Activated B cell treated with CpG ODN at 0.5 μM for 24 hours (primary cell): ENCODE measurements at regions of chr17 and their contacts with region 1.

Region 1: GRCh38 chr17:7296189-7296902 is 1.9 kb upstream of the YBX2 start:
- DNase-seq: peak; percentile 75
- ATAC-seq: peak; percentile 49
- H3K4me3 Mint-ChIP-seq: peak overlapping the region; percentile 32
- H3K27ac Mint-ChIP-seq: no peak overlapping the region
- H3K4me1 Mint-ChIP-seq: peaks cover 24% of the 10 kb centered on the region
- H3K27me3 Mint-ChIP-seq: peaks cover 18% of the 10 kb centered on the region
- CTCF ChIP-seq: peak; percentile 29

Region 2: DNA sequence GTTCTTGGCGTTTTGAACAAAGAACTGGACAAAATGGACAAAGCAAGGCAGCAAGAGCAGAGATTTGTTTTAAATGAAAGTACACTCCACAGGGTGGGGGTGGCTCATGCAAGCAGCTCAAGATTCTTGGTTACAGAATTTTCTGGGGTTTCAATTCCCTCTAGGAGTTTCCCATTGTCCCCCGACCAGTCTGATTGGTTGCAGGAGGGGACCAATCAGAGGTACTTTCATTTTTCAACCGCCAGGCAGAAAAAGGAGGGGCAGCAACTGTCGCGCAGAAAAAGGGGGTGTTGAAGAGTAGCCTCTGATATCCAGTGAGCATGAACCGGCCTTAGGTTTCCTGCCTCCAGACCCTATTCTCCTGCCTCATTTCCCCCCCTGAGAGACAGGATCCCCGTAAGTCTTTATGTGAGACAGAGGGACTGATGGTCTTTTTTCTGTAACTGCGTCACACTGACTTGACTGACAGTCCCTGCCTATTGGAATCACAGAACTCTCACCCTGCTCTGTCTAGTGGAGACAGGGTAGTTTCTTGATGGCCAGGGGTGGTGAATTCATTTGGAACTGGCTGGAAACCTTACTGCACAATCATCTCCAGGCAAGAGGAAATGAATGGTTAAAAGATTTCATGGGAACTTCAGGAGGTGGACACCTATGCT is 359.8 kb before region 1 on chr17:
- CTCF ChIA-PET with region 1: no interaction called
- POLR2A ChIA-PET with region 1: no interaction called
- intact Hi-C with region 1: no loop called
- DNase-seq: no peak
- ATAC-seq: peak; percentile 91
- H3K4me3 Mint-ChIP-seq: peak overlapping the region; percentile 77
- H3K27ac Mint-ChIP-seq: peak overlapping the region; percentile 76
- H3K4me1 Mint-ChIP-seq: peaks cover 9% of the 10 kb centered on the region
- H3K27me3 Mint-ChIP-seq: no peaks in the 10 kb centered on the region
- CTCF ChIP-seq: no peak

Region 3: GRCh38 chr17:7214300-7215135 is 81.8 kb before region 1 on chr17:
- CTCF ChIA-PET with region 1: interaction called, 24 read pairs
- POLR2A ChIA-PET with region 1: no interaction called
- intact Hi-C with region 1: loop called (anchors 1 kb)
- DNase-seq: peak; percentile 98
- ATAC-seq: peak; percentile 86
- H3K4me3 Mint-ChIP-seq: peak overlapping the region; percentile 88
- H3K27ac Mint-ChIP-seq: peak overlapping the region; percentile 94
- H3K4me1 Mint-ChIP-seq: peaks cover 53% of the 10 kb centered on the region
- H3K27me3 Mint-ChIP-seq: no peaks in the 10 kb centered on the region
- CTCF ChIP-seq: no peak

Region 4: DNA sequence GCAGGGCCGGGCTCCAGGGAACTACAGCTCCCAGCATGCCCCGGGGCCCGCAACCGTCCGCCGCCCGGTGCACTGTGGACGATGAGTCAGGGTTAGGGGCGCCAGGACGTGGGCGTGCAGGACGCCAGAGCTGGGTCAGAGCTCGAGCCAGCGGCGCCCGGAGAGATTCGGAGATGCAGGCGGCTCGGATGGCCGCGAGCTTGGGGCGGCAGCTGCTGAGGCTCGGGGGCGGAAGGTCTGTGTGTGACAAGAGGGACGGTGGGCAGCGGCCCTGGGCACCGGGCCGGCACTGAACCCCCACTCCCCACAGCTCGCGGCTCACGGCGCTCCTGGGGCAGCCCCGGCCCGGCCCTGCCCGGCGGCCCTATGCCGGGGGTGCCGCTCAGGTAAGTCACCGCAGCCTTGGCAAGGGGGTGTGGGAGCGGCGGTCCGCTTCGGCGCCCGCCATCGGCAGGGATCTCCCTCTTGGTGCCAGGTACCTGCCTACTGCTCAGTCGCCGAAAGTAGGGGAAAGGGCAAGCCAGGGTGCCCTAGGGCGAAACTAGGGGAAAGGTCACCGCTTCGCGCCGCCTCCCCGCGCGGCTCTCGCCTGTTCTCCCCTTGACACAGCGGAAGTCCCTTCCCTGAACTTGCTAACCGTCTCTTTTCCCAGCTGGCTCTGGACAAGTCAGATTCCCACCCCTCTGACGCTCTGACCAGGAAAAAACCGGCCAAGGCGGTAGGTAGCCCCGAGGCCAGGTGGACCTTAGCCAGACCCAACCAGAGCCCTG is 76.3 kb before region 1 on chr17 and contains the starts of genes ACADVL and DLG4:
- CTCF ChIA-PET with region 1: interaction called, 24 read pairs
- POLR2A ChIA-PET with region 1: interaction called, 10 read pairs
- intact Hi-C with region 1: loop called (anchors 1 kb)
- DNase-seq: peak; percentile 75
- ATAC-seq: peak; percentile 75
- H3K4me3 Mint-ChIP-seq: peak within 1 kb of the TSS; percentile 96
- H3K27ac Mint-ChIP-seq: peak within 1 kb of the TSS; percentile 91
- H3K4me1 Mint-ChIP-seq: peaks cover 53% of the 10 kb centered on the region
- H3K27me3 Mint-ChIP-seq: no peaks in the 10 kb centered on the region
- CTCF ChIP-seq: no peak
- total RNA-seq, gene ACADVL: 438 and 469 TPM in 2 replicates
- total RNA-seq, gene DLG4: 3.9 and 5.0 TPM in 2 replicates

Region 5: DNA sequence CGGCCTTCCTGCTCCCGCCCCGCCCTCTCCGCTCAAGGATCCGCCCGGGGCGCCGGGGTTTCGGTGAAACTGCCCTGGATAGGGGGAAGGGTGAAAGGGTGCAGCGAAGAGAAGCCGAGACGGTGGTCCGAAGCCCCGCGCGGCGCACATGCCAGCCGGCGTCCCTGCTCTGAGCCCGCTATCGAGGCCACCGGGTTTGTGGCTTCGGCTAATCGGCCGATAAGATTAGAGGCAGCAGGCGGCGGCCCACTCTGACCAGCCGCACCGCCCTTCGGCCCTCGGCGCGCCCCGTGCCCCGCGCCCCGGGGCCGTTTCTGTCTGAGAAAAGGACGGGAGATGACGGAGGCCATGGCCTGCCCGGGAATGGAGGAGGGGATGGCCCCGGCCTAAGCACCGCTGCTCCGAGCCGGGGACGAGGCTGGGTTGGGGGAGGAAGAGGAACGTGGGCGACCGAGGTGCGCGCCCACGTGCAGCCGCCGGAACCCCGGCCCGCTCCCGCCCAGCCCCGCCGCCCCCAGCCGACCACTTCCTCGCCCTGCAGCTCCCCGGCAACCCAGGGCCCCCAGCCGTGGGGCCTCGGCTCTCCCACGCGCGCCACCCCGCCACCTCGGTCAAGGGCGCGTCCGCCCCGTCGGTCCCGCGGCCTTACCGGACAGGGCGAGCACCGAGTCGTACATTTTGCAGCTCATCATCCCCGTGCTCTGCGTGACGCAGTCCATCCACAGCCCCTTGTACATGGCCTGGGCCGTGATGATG is 35.0 kb before region 1 on chr17:
- CTCF ChIA-PET with region 1: interaction called, 3 read pairs
- POLR2A ChIA-PET with region 1: interaction called, 3 read pairs
- intact Hi-C with region 1: loop called (anchors 5 kb)
- DNase-seq: peak; percentile 40
- ATAC-seq: peak; percentile 64
- H3K4me3 Mint-ChIP-seq: peak overlapping the region; percentile 77
- H3K27ac Mint-ChIP-seq: peak overlapping the region; percentile 76
- H3K4me1 Mint-ChIP-seq: peaks cover 29% of the 10 kb centered on the region
- H3K27me3 Mint-ChIP-seq: peaks cover 11% of the 10 kb centered on the region
- CTCF ChIP-seq: no peak

Region 6: GRCh38 chr17:7280519-7281429 is 15.6 kb before region 1 on chr17:
- CTCF ChIA-PET with region 1: interaction called, 38 read pairs
- POLR2A ChIA-PET with region 1: interaction called, 14 read pairs
- intact Hi-C with region 1: loop called (anchors 1 kb)
- DNase-seq: peak; percentile 82
- ATAC-seq: peak; percentile 83
- H3K4me3 Mint-ChIP-seq: peak overlapping the region; percentile 82
- H3K27ac Mint-ChIP-seq: peak overlapping the region; percentile 77
- H3K4me1 Mint-ChIP-seq: peaks cover 14% of the 10 kb centered on the region
- H3K27me3 Mint-ChIP-seq: peaks cover 12% of the 10 kb centered on the region
- CTCF ChIP-seq: peak; percentile 42

Region 7: DNA sequence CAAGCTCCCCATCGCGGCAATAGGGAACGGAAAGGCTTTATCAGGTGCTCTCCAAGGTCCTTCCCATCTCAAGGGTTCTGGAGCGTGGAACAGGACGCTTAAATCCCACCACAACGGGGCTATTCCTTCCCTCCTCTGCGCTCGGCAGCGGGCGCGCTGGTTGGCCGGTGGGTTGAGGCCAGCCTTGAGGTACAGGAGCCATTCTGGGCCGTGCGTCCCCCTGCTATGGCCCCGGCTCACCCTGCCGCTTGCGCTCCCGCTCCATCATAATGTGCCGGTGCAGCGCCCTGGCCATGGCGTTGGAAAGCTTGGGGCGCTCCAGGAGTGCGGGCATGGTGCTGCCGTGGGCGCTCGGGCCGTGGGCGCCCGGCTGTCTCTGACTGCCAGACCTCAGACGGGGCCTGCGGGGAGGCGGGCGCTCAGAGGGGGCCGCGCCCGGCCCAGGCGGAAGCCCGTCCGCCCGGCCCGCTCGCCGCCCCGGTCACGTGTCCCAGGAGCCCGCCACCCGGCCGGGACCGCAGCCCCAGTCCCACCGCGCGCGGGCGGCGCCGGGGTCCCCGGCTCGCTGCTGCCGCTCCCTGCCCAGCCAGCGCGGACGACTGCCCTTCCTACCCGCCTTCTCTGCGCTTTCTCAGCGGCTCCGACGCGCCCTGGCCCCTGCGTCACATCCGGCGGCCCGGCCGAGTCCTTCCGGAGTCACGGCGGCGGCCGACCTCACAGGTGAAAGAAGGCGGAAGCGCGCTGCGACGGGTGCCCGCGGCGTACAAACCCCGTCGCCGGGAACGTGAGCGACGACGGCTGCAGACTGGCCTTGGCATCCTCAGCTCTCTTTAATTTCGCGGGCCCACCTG is 18.6 kb after region 1 on chr17 and contains the start of gene GPS2:
- CTCF ChIA-PET with region 1: interaction called, 12 read pairs
- POLR2A ChIA-PET with region 1: interaction called, 5 read pairs
- intact Hi-C with region 1: no loop called
- DNase-seq: peak; percentile 95
- ATAC-seq: peak; percentile 82
- H3K4me3 Mint-ChIP-seq: peak within 1 kb of the TSS; percentile 89
- H3K27ac Mint-ChIP-seq: peak within 1 kb of the TSS; percentile 87
- H3K4me1 Mint-ChIP-seq: peaks cover 54% of the 10 kb centered on the region
- H3K27me3 Mint-ChIP-seq: no peaks in the 10 kb centered on the region
- CTCF ChIP-seq: no peak
- total RNA-seq, gene GPS2: 105 and 115 TPM in 2 replicates

Region 8: GRCh38 chr17:7336240-7337175 is 40.2 kb after region 1 on chr17 and contains the start of gene ACAP1:
- CTCF ChIA-PET with region 1: interaction called, 11 read pairs
- POLR2A ChIA-PET with region 1: interaction called, 7 read pairs
- intact Hi-C with region 1: no loop called
- DNase-seq: peak; percentile 67
- ATAC-seq: peak; percentile 96
- H3K4me3 Mint-ChIP-seq: peak within 1 kb of the TSS; percentile 85
- H3K27ac Mint-ChIP-seq: peak within 1 kb of the TSS; percentile 98
- H3K4me1 Mint-ChIP-seq: peaks cover 49% of the 10 kb centered on the region
- H3K27me3 Mint-ChIP-seq: no peaks in the 10 kb centered on the region
- CTCF ChIP-seq: no peak
- total RNA-seq, gene ACAP1: 298 and 328 TPM in 2 replicates